ENCODE measurements at regions of chr1 and their contacts with region 1.

Region 1: DNA sequence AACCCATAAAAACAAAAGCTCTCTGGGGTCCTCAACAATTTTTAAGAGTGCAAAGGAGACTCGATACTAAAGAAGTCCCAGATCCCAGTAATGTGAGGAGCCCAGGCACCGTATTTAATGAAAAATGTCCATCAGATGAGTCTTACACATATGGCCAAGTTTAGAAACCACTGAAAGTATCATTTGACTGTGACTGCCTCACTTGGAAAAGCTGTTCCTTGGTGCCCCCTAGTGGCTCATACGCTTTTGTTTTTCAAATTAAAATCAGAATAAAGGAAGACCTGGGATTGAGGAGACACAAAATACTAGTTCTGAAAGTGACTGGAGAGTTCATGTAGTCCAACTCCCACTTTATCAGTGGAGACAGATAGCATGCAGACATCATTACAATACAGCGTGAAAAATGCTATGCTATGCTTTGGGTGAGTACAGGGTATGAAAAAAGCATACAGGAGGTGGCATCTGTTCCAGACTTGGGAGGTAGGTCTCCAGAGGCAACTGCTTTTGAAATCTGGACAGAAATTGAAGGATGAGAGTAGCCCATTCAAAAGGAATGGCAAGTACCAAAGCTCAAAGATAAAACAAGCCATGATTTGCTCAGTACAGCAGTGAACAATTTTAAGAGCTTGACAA is 33.8 kb downstream of the GDAP2 start:
- DNase-seq: peak; percentile 12 to 59 (median 47)
- ATAC-seq: peak; percentile 65
- H3K4me3 ChIP-seq: no peak overlapping the region
- H3K4me3 Mint-ChIP-seq: no peak overlapping the region
- H3K27ac ChIP-seq: no peak overlapping the region
- H3K27ac Mint-ChIP-seq: peak overlapping the region in 1 of 9 donors; percentile 46
- H3K4me1 ChIP-seq: no peaks in the 10 kb centered on the region
- H3K4me1 Mint-ChIP-seq: peaks cover 0 to 5% (median 3%) of the 10 kb centered on the region in 7 donors
- H3K27me3 ChIP-seq: no peaks in the 10 kb centered on the region
- H3K27me3 Mint-ChIP-seq: no peaks in the 10 kb centered on the region

Region 2: GRCh38 chr1:117067533-117068370 is 827.8 kb before region 1 on chr1:
- CTCF ChIA-PET with region 1: no interaction called
- POLR2A ChIA-PET with region 1: no interaction called
- intact Hi-C with region 1: loop called in 1 of 2 experiments (anchors 2 kb)
- DNase-seq: peak in 1 of 9 donors; percentile 26
- ATAC-seq: peak; percentile 87
- H3K4me3 ChIP-seq: no peak overlapping the region
- H3K4me3 Mint-ChIP-seq: no peak overlapping the region
- H3K27ac ChIP-seq: no peak overlapping the region
- H3K27ac Mint-ChIP-seq: peak overlapping the region in 1 of 9 donors; percentile 44
- H3K4me1 ChIP-seq: no peaks in the 10 kb centered on the region
- H3K4me1 Mint-ChIP-seq: peaks cover 5 to 41% (median 11%) of the 10 kb centered on the region in 7 donors
- H3K27me3 ChIP-seq: no peaks in the 10 kb centered on the region
- H3K27me3 Mint-ChIP-seq: no peaks in the 10 kb centered on the region

Region 3: DNA sequence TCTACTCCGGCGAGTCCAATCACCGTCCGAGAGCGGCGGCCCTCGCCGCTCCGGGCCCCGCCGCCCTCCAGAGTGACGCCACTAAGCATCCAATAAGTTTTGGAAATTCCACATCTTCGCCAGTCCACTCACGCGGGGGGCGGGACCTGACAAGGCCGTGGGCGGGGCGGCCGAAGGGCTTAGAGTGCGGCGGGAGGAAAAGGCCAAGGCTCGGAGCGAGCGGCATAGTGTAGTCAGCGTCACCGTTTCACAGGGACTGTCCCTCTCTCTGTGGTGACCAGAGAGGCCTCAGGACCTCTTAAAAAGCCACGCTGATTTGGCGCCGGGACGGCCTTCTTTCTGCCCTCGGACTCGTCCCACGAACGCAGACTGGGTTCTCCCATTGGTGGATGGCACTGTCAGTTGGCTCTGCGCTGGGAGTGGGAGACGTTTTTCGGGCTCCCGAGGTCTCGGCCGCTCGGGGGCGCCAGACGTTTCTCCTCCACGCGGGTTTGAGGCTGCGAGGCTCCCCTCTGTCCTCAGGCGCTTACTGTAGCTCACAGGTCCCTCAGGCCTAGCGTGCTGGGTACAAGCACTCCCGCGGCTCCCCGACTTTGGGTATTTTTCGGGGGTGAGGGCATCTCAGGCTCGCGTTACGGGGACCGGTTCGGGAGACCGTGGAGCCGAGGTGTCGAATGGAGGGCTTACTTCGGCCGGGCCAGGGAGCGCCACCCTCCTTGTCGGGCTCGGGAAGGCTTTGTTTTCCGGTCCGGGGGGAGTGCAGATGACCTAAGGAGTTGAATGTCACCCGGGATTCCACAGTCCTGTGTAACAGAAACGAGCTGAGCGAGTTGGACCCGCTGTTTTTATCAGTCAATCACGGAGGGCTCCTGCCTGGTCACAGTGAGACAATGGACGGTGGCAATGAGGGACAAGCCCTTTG is 773.6 kb before region 1 on chr1:
- CTCF ChIA-PET with region 1: no interaction called
- POLR2A ChIA-PET with region 1: no interaction called
- intact Hi-C with region 1: loop called in 1 of 2 experiments (anchors 5 kb)
- DNase-seq: peak; percentile 64 to 81 (median 74)
- ATAC-seq: peak; percentile 90
- H3K4me3 ChIP-seq: peak overlapping the region; percentile 97
- H3K4me3 Mint-ChIP-seq: peak overlapping the region; percentile 83 to 90 (median 87)
- H3K27ac ChIP-seq: peak overlapping the region; percentile 61
- H3K27ac Mint-ChIP-seq: peak overlapping the region in 2 of 9 donors; percentile 16 to 53
- H3K4me1 ChIP-seq: peaks cover 0 to 4% of the 10 kb centered on the region in 2 donors
- H3K4me1 Mint-ChIP-seq: peaks cover 0 to 13% (median 4%) of the 10 kb centered on the region in 7 donors
- H3K27me3 ChIP-seq: no peaks in the 10 kb centered on the region
- H3K27me3 Mint-ChIP-seq: peaks cover 5 to 21% (median 6%) of the 10 kb centered on the region in 5 donors

Region 4: DNA sequence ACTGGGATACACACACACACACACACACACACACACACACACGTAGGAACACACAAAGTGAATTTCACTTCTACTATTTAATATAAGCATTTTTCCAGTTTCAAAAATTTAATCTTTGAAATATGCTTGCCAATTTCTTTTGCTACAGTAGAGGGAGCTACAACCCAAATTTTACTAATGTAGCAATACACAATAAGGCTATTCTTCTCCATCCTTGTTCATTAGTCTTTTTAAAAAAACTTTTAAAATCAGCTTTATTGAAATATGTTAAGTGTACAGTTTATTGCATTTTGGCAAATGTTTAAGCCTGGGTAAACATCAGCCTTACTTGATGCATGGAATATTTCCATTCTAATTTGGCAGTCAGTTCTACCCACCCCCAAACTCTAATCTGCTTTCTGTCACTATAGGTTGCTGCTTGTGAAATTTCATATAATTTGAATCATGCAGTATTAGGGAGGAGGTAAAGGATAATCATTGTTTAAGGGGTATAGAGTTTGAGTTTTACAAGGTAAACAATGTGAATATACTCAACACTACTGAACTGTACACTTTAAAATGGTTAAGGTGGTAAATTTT is 382.8 kb before region 1 on chr1:
- CTCF ChIA-PET with region 1: interaction called, 16 read pairs
- POLR2A ChIA-PET with region 1: no interaction called
- intact Hi-C with region 1: loop called (anchors 1 kb)
- DNase-seq: peak in 5 of 9 donors; percentile 22 to 34 (median 25)
- ATAC-seq: peak; percentile 57
- H3K4me3 ChIP-seq: no peak overlapping the region
- H3K4me3 Mint-ChIP-seq: no peak overlapping the region
- H3K27ac ChIP-seq: no peak overlapping the region
- H3K27ac Mint-ChIP-seq: no peak overlapping the region
- H3K4me1 ChIP-seq: no peaks in the 10 kb centered on the region
- H3K4me1 Mint-ChIP-seq: peaks cover 0 to 3% (median 0%) of the 10 kb centered on the region in 7 donors
- H3K27me3 ChIP-seq: no peaks in the 10 kb centered on the region
- H3K27me3 Mint-ChIP-seq: no peaks in the 10 kb centered on the region

Region 5: GRCh38 chr1:117674521-117675397 is 220.8 kb before region 1 on chr1:
- CTCF ChIA-PET with region 1: no interaction called
- POLR2A ChIA-PET with region 1: no interaction called
- intact Hi-C with region 1: loop called in 1 of 2 experiments (anchors 10 kb)
- DNase-seq: peak in 7 of 9 donors; percentile 52 to 67 (median 58)
- ATAC-seq: peak; percentile 80
- H3K4me3 ChIP-seq: no peak overlapping the region
- H3K4me3 Mint-ChIP-seq: no peak overlapping the region
- H3K27ac ChIP-seq: no peak overlapping the region
- H3K27ac Mint-ChIP-seq: peak overlapping the region in 3 of 9 donors; percentile 53 to 68 (median 65)
- H3K4me1 ChIP-seq: peaks cover 0 to 5% of the 10 kb centered on the region in 2 donors
- H3K4me1 Mint-ChIP-seq: peaks cover 0 to 25% (median 4%) of the 10 kb centered on the region in 7 donors
- H3K27me3 ChIP-seq: no peaks in the 10 kb centered on the region
- H3K27me3 Mint-ChIP-seq: peaks cover 0 to 32% (median 0%) of the 10 kb centered on the region in 5 donors

Region 6: DNA sequence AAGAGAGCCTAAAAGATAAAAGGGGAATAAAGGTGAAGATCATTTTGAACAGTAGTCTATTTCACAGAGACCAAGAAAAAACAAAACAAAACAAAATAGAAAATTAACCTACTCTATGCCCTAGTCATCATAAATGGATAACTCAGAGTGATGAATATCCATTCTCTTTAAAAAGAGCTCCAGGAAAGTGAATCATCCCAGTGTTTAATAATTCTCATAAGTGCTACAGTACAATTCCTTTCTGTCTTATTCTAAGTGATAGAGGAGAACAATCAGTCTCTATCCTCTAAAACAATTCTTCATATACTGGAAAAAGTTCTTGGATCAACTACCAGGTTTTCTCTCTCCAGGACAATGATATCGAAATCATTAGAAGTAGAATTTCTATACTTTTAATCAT is 12.0 kb before region 1 on chr1:
- CTCF ChIA-PET with region 1: interaction called, 4 read pairs
- POLR2A ChIA-PET with region 1: no interaction called
- intact Hi-C with region 1: loop called in 1 of 2 experiments (anchors 1 kb)
- DNase-seq: no peak
- ATAC-seq: no peak
- H3K4me3 ChIP-seq: no peak overlapping the region
- H3K4me3 Mint-ChIP-seq: no peak overlapping the region
- H3K27ac ChIP-seq: no peak overlapping the region
- H3K27ac Mint-ChIP-seq: no peak overlapping the region
- H3K4me1 ChIP-seq: no peaks in the 10 kb centered on the region
- H3K4me1 Mint-ChIP-seq: peaks cover 0 to 8% (median 0%) of the 10 kb centered on the region in 7 donors
- H3K27me3 ChIP-seq: no peaks in the 10 kb centered on the region
- H3K27me3 Mint-ChIP-seq: no peaks in the 10 kb centered on the region

Region 7: GRCh38 chr1:117929173-117929989 is 33.8 kb after region 1 on chr1 and contains the starts of genes GDAP2 and WDR3:
- CTCF ChIA-PET with region 1: no interaction called
- POLR2A ChIA-PET with region 1: no interaction called
- intact Hi-C with region 1: loop called in 1 of 2 experiments (anchors 2 kb)
- DNase-seq: peak; percentile 84 to 98 (median 94)
- ATAC-seq: peak; percentile 96
- H3K4me3 ChIP-seq: peak within 1 kb of the TSS; percentile 94
- H3K4me3 Mint-ChIP-seq: peak within 1 kb of the TSS; percentile 90 to 97 (median 94)
- H3K27ac ChIP-seq: peak within 1 kb of the TSS; percentile 89
- H3K27ac Mint-ChIP-seq: peak within 1 kb of the TSS; percentile 74 to 97 (median 94)
- H3K4me1 ChIP-seq: peaks cover 24 to 30% of the 10 kb centered on the region in 2 donors
- H3K4me1 Mint-ChIP-seq: peaks cover 41 to 79% (median 71%) of the 10 kb centered on the region in 7 donors
- H3K27me3 ChIP-seq: no peaks in the 10 kb centered on the region
- H3K27me3 Mint-ChIP-seq: peaks cover 0 to 2% (median 0%) of the 10 kb centered on the region in 5 donors
- total RNA-seq, gene GDAP2: 22.3 to 31.2 (median 25.2) TPM
- total RNA-seq, gene WDR3: 12.2 to 34.6 (median 30.0) TPM

Region 8: DNA sequence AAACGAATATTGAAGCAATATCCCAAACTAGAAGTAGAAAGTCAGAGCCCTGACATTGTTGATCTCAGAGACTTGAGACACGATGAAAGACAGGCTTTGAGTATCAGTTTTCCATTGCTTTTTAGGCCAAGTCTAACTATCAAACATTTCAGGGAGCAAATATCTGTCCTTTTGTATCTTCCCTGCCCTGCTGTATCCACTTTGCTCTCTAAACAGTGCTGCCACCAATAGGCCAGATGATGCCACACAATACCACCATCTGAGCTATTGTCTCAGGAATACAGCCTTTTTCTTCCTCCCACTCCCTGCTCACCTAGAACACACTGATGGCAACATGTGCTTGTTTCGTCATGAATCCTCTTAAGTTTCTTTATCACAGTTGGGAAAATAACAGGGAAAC is 352.0 kb after region 1 on chr1:
- CTCF ChIA-PET with region 1: no interaction called
- POLR2A ChIA-PET with region 1: no interaction called
- intact Hi-C with region 1: no loop called
- DNase-seq: no peak
- ATAC-seq: no peak
- H3K4me3 ChIP-seq: no peak overlapping the region
- H3K4me3 Mint-ChIP-seq: no peak overlapping the region
- H3K27ac ChIP-seq: no peak overlapping the region
- H3K27ac Mint-ChIP-seq: no peak overlapping the region
- H3K4me1 ChIP-seq: no peaks in the 10 kb centered on the region
- H3K4me1 Mint-ChIP-seq: no peaks in the 10 kb centered on the region
- H3K27me3 ChIP-seq: no peaks in the 10 kb centered on the region
- H3K27me3 Mint-ChIP-seq: no peaks in the 10 kb centered on the region

Region 9: DNA sequence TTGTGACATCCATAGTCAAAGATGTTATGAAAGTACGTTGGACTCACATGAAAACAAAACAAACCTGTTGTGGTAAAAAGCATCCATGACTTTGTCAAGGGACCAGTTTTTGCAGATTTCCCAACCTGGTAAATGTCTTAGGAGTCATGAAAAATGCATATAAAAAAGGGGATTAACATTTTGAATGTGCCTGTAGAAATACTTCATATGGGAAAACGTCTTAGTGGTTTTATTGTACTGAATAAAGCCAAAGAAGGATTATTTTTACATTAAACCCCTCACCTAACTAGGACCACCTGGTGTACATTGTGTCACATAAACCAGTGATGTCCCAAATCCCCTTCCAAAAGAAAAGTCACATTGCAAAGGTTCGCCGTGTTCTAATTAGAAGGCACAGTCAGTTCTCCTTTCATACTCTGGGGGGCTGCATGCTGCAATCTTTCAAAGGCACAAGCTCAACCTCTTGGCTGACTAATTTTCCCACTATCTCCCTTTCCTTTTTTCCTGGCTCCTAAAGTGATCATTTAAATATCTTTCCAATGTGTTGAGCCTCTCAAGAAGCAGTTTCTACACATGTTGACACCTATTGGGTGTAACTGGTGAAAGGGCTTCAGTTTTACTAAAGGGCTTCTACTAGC is 409.2 kb after region 1 on chr1:
- CTCF ChIA-PET with region 1: no interaction called
- POLR2A ChIA-PET with region 1: no interaction called
- intact Hi-C with region 1: no loop called
- DNase-seq: no peak
- ATAC-seq: no peak
- H3K4me3 ChIP-seq: no peak overlapping the region
- H3K4me3 Mint-ChIP-seq: no peak overlapping the region
- H3K27ac ChIP-seq: no peak overlapping the region
- H3K27ac Mint-ChIP-seq: no peak overlapping the region
- H3K4me1 ChIP-seq: no peaks in the 10 kb centered on the region
- H3K4me1 Mint-ChIP-seq: no peaks in the 10 kb centered on the region
- H3K27me3 ChIP-seq: no peaks in the 10 kb centered on the region
- H3K27me3 Mint-ChIP-seq: peaks cover 0 to 2% (median 0%) of the 10 kb centered on the region in 5 donors